Sciatic nerve (tissue), 2 donors: ENCODE measurements at regions of chr1 and their contacts with region 1.

Region 1: DNA sequence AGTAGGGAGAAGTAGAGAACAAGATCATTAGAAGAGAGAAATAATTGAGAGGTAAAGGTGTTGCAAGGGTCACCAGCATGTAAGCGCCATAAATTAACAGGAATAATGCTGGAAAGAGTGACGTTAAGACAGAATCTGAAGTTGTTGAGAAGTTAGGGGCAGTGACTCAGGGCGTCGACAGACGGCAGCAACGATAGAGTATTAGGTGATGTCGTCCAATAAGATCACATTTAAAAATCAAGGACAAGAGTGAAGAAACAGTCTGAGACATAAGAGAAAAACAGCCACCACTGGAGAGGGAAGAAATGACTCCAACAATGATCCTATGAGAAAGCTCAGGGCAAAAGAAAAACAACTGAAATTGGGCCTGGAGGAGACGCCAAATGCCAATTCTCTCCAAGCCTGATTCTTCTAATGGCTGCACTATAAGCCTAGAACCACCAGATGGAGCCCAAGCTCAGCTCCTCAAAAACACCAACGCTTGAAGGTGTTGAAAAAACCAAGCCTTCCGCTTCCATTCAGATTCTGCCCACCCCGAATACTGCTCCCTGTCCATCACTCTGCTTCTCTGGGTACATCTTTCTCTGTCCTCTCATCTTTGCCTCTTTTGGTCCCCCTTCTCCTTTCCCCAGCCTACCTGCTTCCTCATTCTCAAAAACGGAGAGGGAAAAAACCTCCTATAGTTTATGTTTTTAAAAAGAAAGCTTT is 70.0 kb downstream of the LUZP1 start:
- DNase-seq: no peak
- ATAC-seq: peak; percentile 78

Region 2: DNA sequence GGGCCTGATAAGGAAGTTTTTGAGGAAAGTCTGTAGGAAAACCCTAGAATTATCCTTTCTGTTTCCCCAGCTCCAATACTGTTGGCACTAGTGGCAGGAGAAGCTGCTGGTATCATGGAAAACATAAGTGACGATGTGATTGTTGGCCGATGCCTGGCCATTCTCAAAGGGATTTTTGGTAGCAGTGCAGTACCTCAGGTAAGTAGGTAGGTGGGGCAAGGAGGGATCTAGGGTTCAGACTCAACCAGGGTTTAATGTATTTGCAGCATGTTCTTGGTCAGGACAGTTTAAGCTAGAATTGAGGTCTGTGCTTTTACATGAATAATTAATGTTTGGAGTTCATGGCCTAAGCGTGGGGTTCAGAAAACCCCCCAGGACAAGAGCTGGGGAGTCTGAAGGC is 17.2 kb before region 1 on chr1:
- intact Hi-C with region 1: no loop called
- DNase-seq: no peak
- ATAC-seq: no peak

Region 3: DNA sequence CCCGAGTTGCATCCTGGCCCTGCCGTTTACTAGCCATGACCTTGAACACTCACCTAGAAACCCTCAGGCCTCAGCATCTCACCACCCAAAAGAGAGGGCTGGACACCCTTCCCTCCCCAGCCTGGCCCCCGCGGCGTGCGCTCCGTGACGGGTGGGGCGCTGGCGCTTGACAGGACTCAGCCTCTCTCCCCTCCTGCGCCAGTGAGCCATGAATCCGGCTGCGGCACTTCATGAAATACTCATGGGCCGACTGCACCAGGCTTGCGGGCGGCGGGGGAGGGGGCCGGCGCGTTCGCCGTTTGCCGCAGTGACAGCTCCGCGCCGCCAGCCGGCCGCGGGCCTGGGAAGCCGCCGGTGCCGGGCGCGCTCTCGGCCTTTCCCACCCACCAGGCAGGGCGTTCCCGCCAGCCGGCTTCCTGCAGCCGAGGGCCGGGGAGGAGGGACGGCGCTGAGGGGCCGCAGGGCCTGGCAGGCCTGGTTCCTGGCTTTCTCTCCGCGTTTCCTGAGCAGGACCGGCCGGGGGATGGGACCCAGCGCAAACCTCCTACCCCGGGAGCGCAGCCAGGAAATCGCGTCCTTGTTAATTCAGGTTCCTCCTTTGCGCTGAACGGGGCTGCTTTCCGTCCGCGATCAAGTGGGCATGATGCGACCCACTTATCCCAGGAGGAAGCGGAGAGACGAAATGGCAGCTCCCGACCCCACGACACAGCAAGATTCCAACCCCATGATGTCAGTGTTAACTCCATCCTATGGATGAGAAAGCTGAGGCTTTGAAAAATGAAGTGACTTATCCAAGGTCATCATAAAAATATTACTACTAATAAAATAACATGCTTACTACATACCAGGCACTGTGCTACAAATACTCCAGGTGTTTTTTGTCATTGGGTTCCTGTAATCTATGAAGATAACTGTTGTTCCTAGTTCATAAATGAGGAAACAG is 79.1 kb after region 1 on chr1:
- intact Hi-C with region 1: loop called (anchors 5 kb)
- DNase-seq: peak; percentile 79
- ATAC-seq: peak; percentile 88

Region 4: GRCh38 chr1:23188434-23188884 is 89.8 kb after region 1 on chr1:
- intact Hi-C with region 1: loop called (anchors 5 kb)
- DNase-seq: no peak
- ATAC-seq: no peak

Region 5: DNA sequence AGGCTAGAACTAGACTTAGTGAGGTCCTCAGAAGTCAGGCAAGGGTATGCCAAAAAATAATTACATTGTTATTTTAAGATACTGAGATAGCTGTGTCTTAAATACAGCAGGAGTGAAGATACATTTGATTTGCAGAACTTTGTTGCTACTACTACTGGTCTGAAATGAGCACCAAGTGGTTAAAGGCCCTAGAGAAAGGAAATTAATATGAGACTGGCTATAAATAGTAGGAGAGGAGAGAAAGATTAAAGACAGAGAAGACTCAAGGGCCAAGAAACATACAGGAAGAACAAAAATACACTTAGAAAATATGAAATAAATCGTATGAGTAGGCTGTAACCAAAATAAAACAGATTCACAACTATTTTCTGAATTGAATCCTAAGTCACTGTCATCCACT is 224.2 kb after region 1 on chr1:
- intact Hi-C with region 1: no loop called
- DNase-seq: no peak
- ATAC-seq: no peak